Right cardiac atrium (tissue), 5 donors: ENCODE measurements at regions of chr17 and their contacts with region 1.

Region 1: DNA sequence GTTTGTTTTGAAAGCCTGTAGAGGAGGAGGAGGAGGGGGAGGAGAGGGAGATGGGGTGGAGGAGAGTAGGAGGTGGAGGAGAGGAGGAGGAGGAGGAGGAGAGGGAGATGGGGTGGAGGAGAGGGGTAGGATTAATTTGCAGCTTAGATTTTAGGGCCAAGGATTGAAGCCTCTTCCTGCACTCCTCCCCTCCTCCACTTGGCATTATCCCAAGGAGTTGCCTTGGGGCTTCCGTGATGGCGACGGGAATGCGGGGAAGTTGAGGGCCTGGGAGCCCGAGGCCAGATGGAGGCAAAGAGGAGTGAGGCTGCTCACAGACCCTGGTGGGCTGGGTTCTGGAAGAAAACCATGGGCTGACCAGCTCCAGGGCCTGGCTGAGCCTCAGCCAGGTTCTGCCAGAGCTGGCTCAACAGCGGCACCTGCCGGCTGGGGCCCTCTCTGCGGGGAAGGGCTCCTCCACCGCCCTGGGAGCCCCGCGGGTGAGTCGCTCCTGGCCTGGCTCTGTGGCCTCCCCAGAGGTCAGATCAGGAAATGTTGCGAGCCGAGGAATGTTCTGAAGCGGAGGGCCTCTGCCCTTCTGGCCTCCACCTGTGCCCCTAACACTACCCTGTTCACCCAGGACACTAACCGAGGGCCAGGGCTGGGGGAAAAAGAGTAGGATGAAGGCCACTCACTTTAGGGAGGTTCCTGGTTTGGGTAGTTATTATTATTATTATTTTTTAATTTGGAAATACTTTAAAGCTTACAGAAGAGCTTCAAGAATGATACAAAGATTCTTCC is 23.9 kb upstream of the FMNL1 start:
- DNase-seq: peak; percentile 93 to 97 (median 96)
- ATAC-seq: peak; percentile 97
- H3K4me3 ChIP-seq: no peak overlapping the region
- H3K27ac ChIP-seq: no peak overlapping the region
- H3K4me1 ChIP-seq: peaks cover 3% of the 10 kb centered on the region
- H3K27me3 ChIP-seq: no peaks in the 10 kb centered on the region

Region 2: GRCh38 chr17:45155029-45155428 is 42.7 kb before region 1 on chr17:
- intact Hi-C with region 1: loop called in 1 of 4 experiments (anchors 5 kb)
- DNase-seq: no peak
- ATAC-seq: no peak
- H3K4me3 ChIP-seq: no peak overlapping the region
- H3K27ac ChIP-seq: no peak overlapping the region
- H3K4me1 ChIP-seq: peaks cover 6% of the 10 kb centered on the region
- H3K27me3 ChIP-seq: no peaks in the 10 kb centered on the region

Region 3: GRCh38 chr17:45317112-45317928 is 119.6 kb after region 1 on chr17:
- intact Hi-C with region 1: no loop called
- DNase-seq: peak; percentile 100
- ATAC-seq: peak; percentile 94 to 95
- H3K4me3 ChIP-seq: peak overlapping the region; percentile 21
- H3K27ac ChIP-seq: peak overlapping the region; percentile 25
- H3K4me1 ChIP-seq: peaks cover 15% of the 10 kb centered on the region
- H3K27me3 ChIP-seq: no peaks in the 10 kb centered on the region